OCI-LY7 (cell line): ENCODE measurements at regions of chr11 and their contacts with region 1.

Region 1: DNA sequence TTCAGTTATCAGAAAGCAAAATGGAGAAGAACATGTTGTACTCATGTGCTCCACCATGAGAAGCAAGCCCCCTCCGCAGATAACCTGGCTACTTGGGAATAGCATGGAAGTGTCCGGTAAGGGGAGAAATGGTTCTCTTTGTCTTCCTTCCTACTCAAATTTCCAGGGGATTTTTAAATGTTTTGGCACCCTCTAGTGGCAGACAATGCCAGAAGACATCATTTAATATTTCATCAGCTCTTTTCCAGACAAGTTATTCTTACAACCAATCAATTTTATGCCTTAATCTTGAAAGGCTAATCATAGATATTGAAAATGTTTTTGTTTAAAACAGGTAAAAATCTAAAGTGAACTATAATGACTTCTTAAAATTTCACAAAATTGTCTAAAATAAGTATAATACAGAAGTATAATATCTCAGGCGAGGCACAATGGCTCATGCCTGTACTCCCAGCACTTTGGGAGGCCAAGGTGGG is 15.7 kb downstream of the CRTAM start:
- DNase-seq: peak; percentile 74
- H3K4me3 ChIP-seq: no peak overlapping the region
- H3K27ac ChIP-seq: no peak overlapping the region
- H3K4me1 ChIP-seq: peaks cover 15% of the 10 kb centered on the region
- CTCF ChIP-seq: peak; percentile 97

Region 2: GRCh38 chr11:122578168-122578825 is 275.7 kb before region 1 on chr11:
- CTCF ChIA-PET with region 1: no interaction called
- POLR2A ChIA-PET with region 1: interaction called, 5 read pairs
- intact Hi-C with region 1: loop called (anchors 1 kb)
- DNase-seq: peak; percentile 6
- H3K4me3 ChIP-seq: no peak overlapping the region
- H3K27ac ChIP-seq: no peak overlapping the region
- H3K4me1 ChIP-seq: peaks cover 3% of the 10 kb centered on the region
- CTCF ChIP-seq: peak; percentile 54

Region 3: GRCh38 chr11:122628810-122629555 is 225.0 kb before region 1 on chr11:
- CTCF ChIA-PET with region 1: interaction called, 14 read pairs
- POLR2A ChIA-PET with region 1: interaction called, 10 read pairs
- intact Hi-C with region 1: loop called (anchors 1 kb)
- DNase-seq: peak; percentile 85
- H3K4me3 ChIP-seq: no peak overlapping the region
- H3K27ac ChIP-seq: no peak overlapping the region
- H3K4me1 ChIP-seq: peaks cover 10% of the 10 kb centered on the region
- CTCF ChIP-seq: peak; percentile 94

Region 4: DNA sequence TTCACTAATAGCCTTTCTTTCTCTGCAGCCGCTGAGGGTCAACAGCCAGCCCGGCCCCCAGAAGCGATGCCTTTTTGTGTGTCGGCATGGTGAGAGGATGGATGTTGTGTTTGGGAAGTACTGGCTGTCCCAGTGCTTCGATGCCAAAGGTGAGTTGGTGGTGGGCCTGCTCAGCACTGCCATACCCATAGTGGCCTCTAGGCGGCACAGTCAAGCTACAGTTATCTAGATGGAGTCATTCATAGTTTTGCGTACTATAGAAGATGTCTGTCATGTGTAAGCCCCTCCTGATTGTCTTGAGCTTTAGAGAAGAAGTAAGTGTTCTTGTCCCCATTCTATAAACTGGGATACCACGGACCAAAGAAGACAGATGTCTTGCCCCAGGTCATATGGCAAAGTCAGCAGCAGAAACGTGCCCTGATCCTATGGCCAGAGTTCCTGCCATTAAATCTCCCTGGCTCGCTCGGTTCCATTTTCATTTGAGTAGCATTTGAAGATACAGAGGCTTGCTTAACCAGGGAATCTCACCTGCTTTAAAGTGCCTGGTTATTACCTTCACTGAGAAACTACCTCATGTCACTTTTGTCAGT is 57.8 kb before region 1 on chr11:
- CTCF ChIA-PET with region 1: no interaction called
- POLR2A ChIA-PET with region 1: no interaction called
- intact Hi-C with region 1: loop called (anchors 1 kb)
- DNase-seq: peak; percentile 34
- H3K4me3 ChIP-seq: no peak overlapping the region
- H3K27ac ChIP-seq: no peak overlapping the region
- H3K4me1 ChIP-seq: no peaks in the 10 kb centered on the region
- CTCF ChIP-seq: peak; percentile 86

Region 5: GRCh38 chr11:122882857-122883645 is 29.0 kb after region 1 on chr11:
- CTCF ChIA-PET with region 1: no interaction called
- POLR2A ChIA-PET with region 1: no interaction called
- intact Hi-C with region 1: no loop called
- DNase-seq: no peak
- H3K4me3 ChIP-seq: no peak overlapping the region
- H3K27ac ChIP-seq: no peak overlapping the region
- H3K4me1 ChIP-seq: no peaks in the 10 kb centered on the region
- CTCF ChIP-seq: no peak